ENCODE measurements at regions of chr21 and their contacts with region 1.

Region 1: GRCh38 chr21:25790122-25790877 is 55.5 kb downstream of the GABPA start:
- DNase-seq: no peak
- ATAC-seq: peak; percentile 86

Region 2: DNA sequence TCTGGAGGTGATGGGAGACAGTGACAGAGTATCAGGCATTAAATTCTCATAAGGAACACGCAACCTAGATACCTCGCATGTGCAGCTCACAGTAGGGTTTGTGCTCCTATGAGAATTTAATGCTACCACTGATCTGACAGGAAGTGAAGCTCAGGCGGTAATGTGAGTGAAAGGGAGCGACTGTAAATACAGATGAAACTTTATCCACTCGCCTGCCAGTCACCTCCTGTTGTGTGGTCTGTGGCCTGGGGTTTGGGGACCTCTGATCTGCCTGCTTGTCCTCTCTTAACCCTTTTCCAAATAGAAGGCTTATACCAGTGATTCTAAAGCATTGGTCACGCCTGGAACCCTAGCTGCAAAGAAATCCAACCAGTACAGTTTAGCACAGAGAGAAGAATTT is 40.2 kb before region 1 on chr21:
- intact Hi-C with region 1: no loop called
- DNase-seq: no peak
- ATAC-seq: no peak

Region 3: DNA sequence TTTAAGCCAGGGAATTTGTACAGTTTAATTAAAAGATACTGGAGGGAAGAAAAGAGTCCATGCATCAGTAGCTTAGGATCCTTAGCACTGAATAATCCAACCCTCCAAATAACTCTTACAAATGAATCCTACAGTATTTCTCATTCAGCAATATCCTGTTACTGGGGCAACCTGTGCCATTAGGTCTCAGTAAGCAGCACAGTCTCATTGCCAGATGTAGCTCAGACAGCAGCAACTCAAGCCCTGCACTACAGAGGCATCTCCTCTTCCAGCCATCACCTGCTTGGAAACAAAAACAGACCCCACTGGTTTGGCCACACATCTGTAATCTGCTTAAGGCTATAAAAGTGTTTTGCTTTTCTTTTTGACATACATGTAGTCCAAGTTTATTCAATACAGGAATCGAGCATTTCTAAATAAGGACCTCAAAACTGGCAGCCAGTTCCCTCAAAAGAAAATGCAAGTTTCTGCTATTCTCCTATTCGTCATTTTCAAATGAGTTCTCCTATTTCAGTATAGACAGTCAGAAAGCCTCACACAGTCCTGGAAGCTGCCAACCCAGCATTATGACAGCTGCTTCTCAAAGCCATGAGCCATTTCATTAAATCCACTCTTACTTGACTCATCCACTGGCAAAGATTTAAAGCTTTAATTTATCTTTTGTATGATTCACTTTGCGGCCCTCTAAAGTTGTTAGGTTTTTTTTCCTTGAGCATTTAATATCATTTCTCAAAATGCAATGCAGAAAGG is 251.3 kb after region 1 on chr21:
- intact Hi-C with region 1: no loop called
- DNase-seq: no peak
- ATAC-seq: peak; percentile 70

Region 4: GRCh38 chr21:26715878-26716506 is 925.7 kb after region 1 on chr21:
- intact Hi-C with region 1: loop called (anchors 10 kb)
- DNase-seq: no peak
- ATAC-seq: peak; percentile 76